AG04450 (cell line): ENCODE measurements at regions of chr3 and their contacts with region 1.

Region 1: GRCh38 chr3:108552267-108553159 is 36.7 kb downstream of the CIP2A start:
- DNase-seq: peak; percentile 4
- H3K4me3 ChIP-seq: no peak overlapping the region
- H3K27ac ChIP-seq: no peak overlapping the region
- H3K27me3 ChIP-seq: no peaks in the 10 kb centered on the region
- CTCF ChIP-seq: peak; percentile 53

Region 2: DNA sequence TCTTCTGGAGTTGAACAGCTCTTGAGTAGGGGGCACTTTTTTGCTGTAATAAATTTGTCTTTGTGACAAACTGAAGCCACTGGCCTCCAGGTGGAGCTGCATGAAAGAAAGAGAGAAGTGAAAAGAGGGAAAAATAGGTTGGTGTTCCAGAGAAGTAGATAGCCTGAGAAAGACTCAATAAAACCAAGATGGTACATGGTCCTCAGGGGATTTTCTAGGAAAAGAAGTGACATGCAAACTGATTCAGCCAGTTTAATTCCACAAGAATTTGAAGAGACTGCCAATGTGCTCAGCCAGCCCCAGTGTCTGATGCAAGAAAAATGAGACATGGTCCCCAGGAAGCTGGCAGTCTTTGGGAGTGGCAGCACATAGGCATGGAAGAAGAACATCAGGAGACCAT is 614.4 kb before region 1 on chr3:
- CTCF ChIA-PET with region 1: interaction called, 18 read pairs
- POLR2A ChIA-PET with region 1: no interaction called
- DNase-seq: no peak
- H3K4me3 ChIP-seq: no peak overlapping the region
- H3K27ac ChIP-seq: no peak overlapping the region
- H3K27me3 ChIP-seq: peaks cover 3% of the 10 kb centered on the region
- CTCF ChIP-seq: peak; percentile 57

Region 3: DNA sequence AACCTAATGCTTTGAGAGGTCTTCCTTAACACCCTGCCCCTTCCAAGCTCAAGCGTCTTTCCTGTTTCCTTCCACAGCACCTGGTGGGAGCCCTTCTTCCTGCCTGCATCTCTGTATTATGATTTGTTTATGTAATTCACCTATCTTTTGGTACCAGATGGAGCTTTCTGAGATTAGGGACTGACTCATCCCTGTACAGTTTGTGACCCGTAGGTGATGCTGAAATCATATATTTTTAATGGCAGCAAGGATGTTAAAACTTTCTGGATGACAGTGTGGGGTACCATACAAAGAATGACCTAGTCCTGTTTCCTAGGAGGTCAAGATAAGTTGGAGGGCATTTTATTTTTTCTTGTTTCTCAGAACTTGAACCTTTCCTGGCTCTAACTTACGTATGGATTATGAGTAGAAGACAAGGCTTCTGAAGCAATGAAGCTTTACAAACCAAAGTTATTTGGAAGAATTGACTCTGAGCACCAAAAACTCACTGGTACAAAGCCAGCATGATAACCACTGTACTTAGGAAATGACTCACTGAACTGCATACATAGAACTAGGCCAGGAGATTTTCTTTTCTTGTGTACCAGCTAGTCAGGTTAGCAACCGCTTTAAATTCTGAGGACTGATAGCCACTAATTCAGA is 209.6 kb before region 1 on chr3:
- CTCF ChIA-PET with region 1: no interaction called
- POLR2A ChIA-PET with region 1: no interaction called
- DNase-seq: no peak
- H3K4me3 ChIP-seq: no peak overlapping the region
- H3K27ac ChIP-seq: no peak overlapping the region
- H3K27me3 ChIP-seq: no peaks in the 10 kb centered on the region
- CTCF ChIP-seq: no peak

Region 4: GRCh38 chr3:108494906-108495531 is 57.5 kb before region 1 on chr3:
- CTCF ChIA-PET with region 1: interaction called, 193 read pairs
- POLR2A ChIA-PET with region 1: no interaction called
- DNase-seq: no peak
- H3K4me3 ChIP-seq: no peak overlapping the region
- H3K27ac ChIP-seq: no peak overlapping the region
- H3K27me3 ChIP-seq: no peaks in the 10 kb centered on the region
- CTCF ChIP-seq: no peak

Region 5: GRCh38 chr3:108505811-108506210 is 46.7 kb before region 1 on chr3:
- CTCF ChIA-PET with region 1: interaction called, 10 read pairs
- POLR2A ChIA-PET with region 1: no interaction called
- DNase-seq: no peak
- H3K4me3 ChIP-seq: no peak overlapping the region
- H3K27ac ChIP-seq: no peak overlapping the region
- H3K27me3 ChIP-seq: no peaks in the 10 kb centered on the region
- CTCF ChIP-seq: no peak

Region 6: GRCh38 chr3:108564564-108564963 is 12.1 kb after region 1 on chr3:
- CTCF ChIA-PET with region 1: interaction called, 33 read pairs
- POLR2A ChIA-PET with region 1: no interaction called
- DNase-seq: no peak
- H3K4me3 ChIP-seq: no peak overlapping the region
- H3K27ac ChIP-seq: no peak overlapping the region
- H3K27me3 ChIP-seq: no peaks in the 10 kb centered on the region
- CTCF ChIP-seq: no peak